Naive thymus-derived CD4-positive, alpha-beta T cell (primary cell): ENCODE measurements at regions of chr9 and their contacts with region 1.

Region 1: GRCh38 chr9:87973730-87974292 is 522 bp downstream of the CDK20 start:
- DNase-seq: peak in 1 of 9 donors; percentile 17
- ATAC-seq: no peak
- H3K4me3 ChIP-seq: peak overlapping the region; percentile 96
- H3K4me3 Mint-ChIP-seq: peak overlapping the region; percentile 87 to 99 (median 95)
- H3K27ac ChIP-seq: peak overlapping the region; percentile 77
- H3K27ac Mint-ChIP-seq: peak overlapping the region; percentile 95 to 99 (median 97)
- H3K4me1 ChIP-seq: peaks cover 0 to 10% of the 10 kb centered on the region in 2 donors
- H3K4me1 Mint-ChIP-seq: peaks cover 13 to 36% (median 32%) of the 10 kb centered on the region in 7 donors
- H3K27me3 ChIP-seq: no peaks in the 10 kb centered on the region
- H3K27me3 Mint-ChIP-seq: peaks cover 0 to 3% (median 0%) of the 10 kb centered on the region in 5 donors

Region 2: GRCh38 chr9:86354011-86354817 is 1619.6 kb before region 1 on chr9 and contains the start of gene TUT7:
- CTCF ChIA-PET with region 1: no interaction called
- POLR2A ChIA-PET with region 1: no interaction called
- intact Hi-C with region 1: loop called in 1 of 2 experiments (anchors 5 kb)
- DNase-seq: peak; percentile 90 to 99 (median 94)
- ATAC-seq: peak; percentile 98
- H3K4me3 ChIP-seq: peak within 1 kb of the TSS; percentile 95
- H3K4me3 Mint-ChIP-seq: peak within 1 kb of the TSS; percentile 80 to 97 (median 95)
- H3K27ac ChIP-seq: peak within 1 kb of the TSS; percentile 84
- H3K27ac Mint-ChIP-seq: peak within 1 kb of the TSS; percentile 85 to 97 (median 94)
- H3K4me1 ChIP-seq: peaks cover 7 to 14% of the 10 kb centered on the region in 2 donors
- H3K4me1 Mint-ChIP-seq: peaks cover 28 to 57% (median 50%) of the 10 kb centered on the region in 7 donors
- H3K27me3 ChIP-seq: no peaks in the 10 kb centered on the region
- H3K27me3 Mint-ChIP-seq: peaks cover 0 to 10% (median 0%) of the 10 kb centered on the region in 5 donors
- total RNA-seq, gene TUT7: 38.5 to 57.4 (median 49.0) TPM

Region 3: DNA sequence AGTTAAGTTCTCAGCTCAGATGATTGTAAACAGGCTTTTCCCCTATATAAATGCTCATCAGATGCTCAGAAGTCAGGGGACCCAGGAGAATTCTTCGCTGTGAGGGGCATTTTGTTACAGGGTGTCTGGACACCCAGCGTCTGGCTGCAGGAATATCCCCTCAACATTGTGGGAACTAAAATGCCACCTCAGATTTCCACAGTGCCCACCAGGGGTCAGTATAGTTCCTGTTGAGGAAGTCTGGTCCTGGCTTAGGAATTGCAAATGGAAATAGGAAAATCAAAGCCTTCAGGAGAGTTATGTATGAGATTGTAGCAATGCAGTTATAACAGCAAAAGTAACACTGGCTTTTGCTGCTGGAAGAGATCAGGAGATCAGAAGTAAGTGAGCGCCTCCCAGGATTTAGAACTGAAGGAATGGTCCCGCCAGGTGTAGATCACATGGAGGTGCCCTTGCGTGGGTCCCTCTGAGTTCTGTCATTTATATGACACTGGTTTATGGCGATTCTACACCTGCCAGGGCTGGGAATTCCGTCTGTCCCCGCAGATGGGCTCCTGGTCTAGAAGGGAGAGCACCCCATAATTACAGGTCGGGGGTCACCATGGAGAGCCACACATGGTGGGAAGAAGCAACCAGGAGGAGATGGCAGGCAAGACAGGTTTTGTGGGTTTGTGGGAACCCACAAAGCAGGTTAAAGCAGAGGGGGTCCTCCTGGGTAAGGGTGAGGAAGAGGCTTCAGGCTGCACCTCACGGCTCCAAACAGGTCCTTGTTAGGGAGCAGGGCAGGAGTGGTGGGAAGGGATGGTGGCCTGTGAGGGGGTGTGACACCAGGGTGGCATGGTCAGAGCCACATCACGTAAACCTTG is 294.9 kb before region 1 on chr9:
- CTCF ChIA-PET with region 1: interaction called, 4 read pairs
- POLR2A ChIA-PET with region 1: no interaction called
- intact Hi-C with region 1: loop called in 1 of 2 experiments (anchors 2 kb)
- DNase-seq: peak in 5 of 9 donors; percentile 25 to 44 (median 30)
- ATAC-seq: peak; percentile 50
- H3K4me3 ChIP-seq: no peak overlapping the region
- H3K4me3 Mint-ChIP-seq: no peak overlapping the region
- H3K27ac ChIP-seq: no peak overlapping the region
- H3K27ac Mint-ChIP-seq: peak overlapping the region in 1 of 9 donors; percentile 61
- H3K4me1 ChIP-seq: no peaks in the 10 kb centered on the region
- H3K4me1 Mint-ChIP-seq: peaks cover 5 to 19% (median 11%) of the 10 kb centered on the region in 7 donors
- H3K27me3 ChIP-seq: no peaks in the 10 kb centered on the region
- H3K27me3 Mint-ChIP-seq: no peaks in the 10 kb centered on the region

Region 4: DNA sequence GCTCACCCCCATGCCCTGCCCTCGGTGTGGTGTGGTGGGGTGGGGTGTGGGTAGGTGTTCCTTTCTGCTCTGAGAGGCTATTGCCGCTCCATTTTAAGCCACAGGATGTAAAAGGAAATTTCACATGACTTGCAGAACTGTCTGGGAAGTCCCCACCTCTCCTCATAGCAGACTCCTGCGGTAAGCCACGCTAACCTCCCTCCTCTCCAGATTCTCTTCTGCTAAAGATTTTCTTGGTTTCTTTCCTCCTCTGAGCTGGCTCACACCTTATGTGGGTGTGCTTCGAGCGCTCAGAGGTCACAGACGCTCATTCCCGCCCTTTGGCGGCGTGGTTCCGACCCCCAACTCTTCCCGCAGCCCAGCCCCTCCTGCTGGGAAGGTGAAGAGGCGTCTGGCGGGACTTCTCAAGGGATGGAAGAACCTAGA is 33.4 kb after region 1 on chr9:
- CTCF ChIA-PET with region 1: no interaction called
- POLR2A ChIA-PET with region 1: no interaction called
- intact Hi-C with region 1: loop called in 1 of 2 experiments (anchors 1 kb)
- DNase-seq: peak in 5 of 9 donors; percentile 1 to 58 (median 9)
- ATAC-seq: peak; percentile 72
- H3K4me3 ChIP-seq: no peak overlapping the region
- H3K4me3 Mint-ChIP-seq: peak overlapping the region in 7 of 10 donors; percentile 32 to 68 (median 45)
- H3K27ac ChIP-seq: no peak overlapping the region
- H3K27ac Mint-ChIP-seq: peak overlapping the region in 1 of 9 donors; percentile 6
- H3K4me1 ChIP-seq: no peaks in the 10 kb centered on the region
- H3K4me1 Mint-ChIP-seq: peaks cover 5 to 10% (median 5%) of the 10 kb centered on the region in 7 donors
- H3K27me3 ChIP-seq: no peaks in the 10 kb centered on the region
- H3K27me3 Mint-ChIP-seq: peaks cover 3 to 16% (median 8%) of the 10 kb centered on the region in 5 donors

Region 5: GRCh38 chr9:88322906-88323566 is 349.2 kb after region 1 on chr9:
- CTCF ChIA-PET with region 1: no interaction called
- POLR2A ChIA-PET with region 1: no interaction called
- intact Hi-C with region 1: loop called (anchors 10 kb)
- DNase-seq: peak; percentile 11 to 84 (median 73)
- ATAC-seq: peak; percentile 98
- H3K4me3 ChIP-seq: peak overlapping the region; percentile 2
- H3K4me3 Mint-ChIP-seq: peak overlapping the region; percentile 35 to 84 (median 67)
- H3K27ac ChIP-seq: no peak overlapping the region
- H3K27ac Mint-ChIP-seq: peak overlapping the region; percentile 74 to 97 (median 87)
- H3K4me1 ChIP-seq: peaks cover 16 to 25% of the 10 kb centered on the region in 2 donors
- H3K4me1 Mint-ChIP-seq: peaks cover 26 to 50% (median 36%) of the 10 kb centered on the region in 7 donors
- H3K27me3 ChIP-seq: no peaks in the 10 kb centered on the region
- H3K27me3 Mint-ChIP-seq: no peaks in the 10 kb centered on the region

Region 6: GRCh38 chr9:88534456-88535261 is 560.8 kb after region 1 on chr9 and contains the start of gene NXNL2:
- CTCF ChIA-PET with region 1: no interaction called
- POLR2A ChIA-PET with region 1: no interaction called
- intact Hi-C with region 1: loop called in 1 of 2 experiments (anchors 1 kb)
- DNase-seq: peak in 8 of 9 donors; percentile 21 to 59 (median 48)
- ATAC-seq: peak; percentile 80
- H3K4me3 ChIP-seq: peak within 1 kb of the TSS; percentile 54
- H3K4me3 Mint-ChIP-seq: peak within 1 kb of the TSS; percentile 53 to 88 (median 72)
- H3K27ac ChIP-seq: no peak within 1 kb of the TSS
- H3K27ac Mint-ChIP-seq: peak within 1 kb of the TSS in 2 of 9 donors; percentile 55 to 62
- H3K4me1 ChIP-seq: peaks cover 0 to 12% of the 10 kb centered on the region in 2 donors
- H3K4me1 Mint-ChIP-seq: peaks cover 9 to 32% (median 20%) of the 10 kb centered on the region in 7 donors
- H3K27me3 ChIP-seq: no peaks in the 10 kb centered on the region
- H3K27me3 Mint-ChIP-seq: peaks cover 0 to 81% (median 24%) of the 10 kb centered on the region in 5 donors
- total RNA-seq, gene NXNL2: not detected

Region 7: GRCh38 chr9:88814577-88814976 is 840.8 kb after region 1 on chr9:
- CTCF ChIA-PET with region 1: no interaction called
- POLR2A ChIA-PET with region 1: no interaction called
- intact Hi-C with region 1: loop called in 1 of 2 experiments (anchors 10 kb)
- DNase-seq: no peak
- ATAC-seq: no peak
- H3K4me3 ChIP-seq: no peak overlapping the region
- H3K4me3 Mint-ChIP-seq: no peak overlapping the region
- H3K27ac ChIP-seq: no peak overlapping the region
- H3K27ac Mint-ChIP-seq: no peak overlapping the region
- H3K4me1 ChIP-seq: no peaks in the 10 kb centered on the region
- H3K4me1 Mint-ChIP-seq: peaks cover 0 to 6% (median 0%) of the 10 kb centered on the region in 7 donors
- H3K27me3 ChIP-seq: no peaks in the 10 kb centered on the region
- H3K27me3 Mint-ChIP-seq: peaks cover 10 to 39% (median 32%) of the 10 kb centered on the region in 5 donors